ENCODE measurements at regions of chr18 and their contacts with region 1.

Region 1: GRCh38 chr18:623761-624620 is 27.2 kb downstream of the CLUL1 start:
- DNase-seq: peak; percentile 56
- H3K4me3 ChIP-seq: no peak overlapping the region
- H3K27ac ChIP-seq: no peak overlapping the region
- H3K27me3 ChIP-seq: peaks cover 32% of the 10 kb centered on the region
- CTCF ChIP-seq: peak; percentile 77

Region 2: GRCh38 chr18:267688-268552 is 356.1 kb before region 1 on chr18 and contains the start of gene THOC1:
- CTCF ChIA-PET with region 1: interaction called, 10 read pairs
- POLR2A ChIA-PET with region 1: no interaction called
- DNase-seq: peak; percentile 79
- H3K4me3 ChIP-seq: peak within 1 kb of the TSS; percentile 93
- H3K27ac ChIP-seq: peak within 1 kb of the TSS; percentile 91
- H3K27me3 ChIP-seq: no peaks in the 10 kb centered on the region
- CTCF ChIP-seq: 0 out of 2 replicates have a peak, but pooled peaks have one; percentile 1
- polyA plus RNA-seq, gene THOC1: 22.2 and 35.1 TPM in 2 replicates

Region 3: GRCh38 chr18:286515-287310 is 337.3 kb before region 1 on chr18:
- CTCF ChIA-PET with region 1: interaction called, 18 read pairs
- POLR2A ChIA-PET with region 1: no interaction called
- DNase-seq: no peak
- H3K4me3 ChIP-seq: no peak overlapping the region
- H3K27ac ChIP-seq: no peak overlapping the region
- H3K27me3 ChIP-seq: peaks cover 8% of the 10 kb centered on the region
- CTCF ChIP-seq: peak; percentile 78

Region 4: GRCh38 chr18:293536-293935 is 330.5 kb before region 1 on chr18:
- CTCF ChIA-PET with region 1: interaction called, 18 read pairs
- POLR2A ChIA-PET with region 1: no interaction called
- DNase-seq: no peak
- H3K4me3 ChIP-seq: no peak overlapping the region
- H3K27ac ChIP-seq: no peak overlapping the region
- H3K27me3 ChIP-seq: peaks cover 29% of the 10 kb centered on the region
- CTCF ChIP-seq: peak; percentile 21

Region 5: DNA sequence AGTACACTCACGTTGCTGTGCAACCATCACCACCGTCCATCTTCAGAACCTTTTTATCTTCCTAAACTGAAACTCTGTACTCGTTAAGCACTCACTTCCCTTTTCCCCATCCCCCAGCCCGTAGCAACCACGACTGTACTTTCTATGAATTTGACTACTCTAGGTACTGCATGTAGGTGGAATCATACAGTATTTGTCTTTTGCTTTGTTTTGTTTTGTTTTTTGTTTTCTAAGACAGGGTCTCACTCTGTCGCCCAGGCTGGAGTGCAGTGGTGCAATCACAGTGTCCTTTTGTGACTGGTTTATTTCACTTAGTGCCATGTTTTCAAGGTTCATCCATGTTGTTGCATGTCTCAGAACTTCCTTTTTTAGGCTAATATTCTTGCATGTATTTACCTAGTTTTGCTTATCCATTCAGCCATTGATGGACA is 26.5 kb after region 1 on chr18:
- CTCF ChIA-PET with region 1: interaction called, 14 read pairs
- POLR2A ChIA-PET with region 1: no interaction called
- DNase-seq: no peak
- H3K4me3 ChIP-seq: no peak overlapping the region
- H3K27ac ChIP-seq: no peak overlapping the region
- H3K27me3 ChIP-seq: no peaks in the 10 kb centered on the region
- CTCF ChIP-seq: no peak